ENCODE measurements at regions of chr1 and their contacts with region 1.

Region 1: DNA sequence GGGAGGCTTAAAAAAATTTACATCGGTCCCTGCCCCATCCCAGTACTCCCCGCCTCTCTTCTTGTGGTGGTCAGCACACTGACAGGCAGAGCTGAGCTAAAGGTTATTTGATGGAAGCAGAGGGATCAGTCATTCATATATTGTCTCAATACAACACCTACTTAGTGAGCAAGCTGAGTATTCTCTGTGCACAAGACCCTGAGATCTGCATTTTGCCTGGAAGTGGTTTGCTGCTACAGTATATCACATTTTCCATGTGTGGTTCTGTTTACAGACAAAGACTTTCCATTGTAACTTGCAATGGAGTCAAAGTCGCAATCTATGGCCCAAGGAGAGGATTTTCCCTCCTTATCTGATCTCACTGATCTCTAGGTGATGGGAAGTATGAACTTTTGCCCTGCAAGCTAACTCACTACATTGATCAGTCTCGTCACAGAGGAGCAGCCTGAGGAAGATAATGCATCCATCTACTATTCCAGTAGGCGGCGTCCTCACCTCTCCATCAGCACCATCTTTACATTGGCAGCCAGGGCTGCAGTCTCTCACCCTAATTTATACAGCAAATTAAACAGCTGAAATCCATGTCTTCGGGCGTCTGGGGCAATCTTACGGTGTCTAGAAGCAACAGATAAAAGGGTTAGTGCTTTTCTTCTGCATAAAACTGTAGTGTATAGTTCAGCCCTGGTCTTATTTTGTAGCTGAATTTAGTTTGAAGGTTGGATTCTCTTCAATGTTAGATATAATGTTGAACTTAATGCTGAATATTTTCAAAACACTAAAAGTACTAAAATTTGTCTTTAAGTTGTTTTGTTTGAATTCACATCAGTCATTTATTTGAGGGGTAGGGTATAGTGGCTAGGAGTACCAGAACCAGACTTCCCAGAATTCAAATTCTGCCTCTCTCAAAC is 3.2 kb upstream of the TRAF5 start:
- DNase-seq: peak; percentile 81
- ATAC-seq: peak; percentile 83
- H3K4me3 Mint-ChIP-seq: no peak overlapping the region
- H3K27ac Mint-ChIP-seq: peak overlapping the region; percentile 42
- H3K4me1 Mint-ChIP-seq: peaks cover 69% of the 10 kb centered on the region
- H3K27me3 Mint-ChIP-seq: no peaks in the 10 kb centered on the region

Region 2: DNA sequence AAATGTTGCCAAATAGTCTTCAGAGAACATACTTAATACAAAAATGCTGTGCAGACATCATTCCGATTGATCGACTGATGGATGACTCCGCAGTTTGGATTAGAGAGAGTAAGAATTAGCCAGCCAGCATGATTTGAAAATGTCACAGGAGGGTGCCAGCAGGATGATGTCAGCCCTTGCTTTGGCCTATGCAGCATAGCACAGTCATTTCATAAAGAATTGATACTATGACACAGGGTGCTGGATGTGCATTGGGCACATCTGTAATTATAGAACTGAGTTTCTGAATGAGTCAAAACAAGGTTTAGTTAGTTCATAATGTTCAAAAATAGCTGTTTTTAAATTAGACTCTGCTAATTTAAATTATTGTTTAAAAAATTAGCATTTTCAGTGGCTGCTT is 18.4 kb before region 1 on chr1:
- CTCF ChIA-PET with region 1: interaction called, 6 read pairs
- POLR2A ChIA-PET with region 1: no interaction called
- intact Hi-C with region 1: loop called (anchors 1 kb)
- DNase-seq: peak; percentile 76
- ATAC-seq: peak; percentile 100
- H3K4me3 Mint-ChIP-seq: no peak overlapping the region
- H3K27ac Mint-ChIP-seq: peak overlapping the region; percentile 74
- H3K4me1 Mint-ChIP-seq: peaks cover 38% of the 10 kb centered on the region
- H3K27me3 Mint-ChIP-seq: no peaks in the 10 kb centered on the region

Region 3: GRCh38 chr1:211352985-211353515 is 29.6 kb after region 1 on chr1:
- CTCF ChIA-PET with region 1: interaction called, 23 read pairs
- POLR2A ChIA-PET with region 1: interaction called, 5 read pairs
- intact Hi-C with region 1: loop called (anchors 1 kb)
- DNase-seq: peak; percentile 73
- ATAC-seq: peak; percentile 75
- H3K4me3 Mint-ChIP-seq: peak overlapping the region; percentile 28
- H3K27ac Mint-ChIP-seq: peak overlapping the region; percentile 88
- H3K4me1 Mint-ChIP-seq: peaks cover 81% of the 10 kb centered on the region
- H3K27me3 Mint-ChIP-seq: no peaks in the 10 kb centered on the region

Region 4: DNA sequence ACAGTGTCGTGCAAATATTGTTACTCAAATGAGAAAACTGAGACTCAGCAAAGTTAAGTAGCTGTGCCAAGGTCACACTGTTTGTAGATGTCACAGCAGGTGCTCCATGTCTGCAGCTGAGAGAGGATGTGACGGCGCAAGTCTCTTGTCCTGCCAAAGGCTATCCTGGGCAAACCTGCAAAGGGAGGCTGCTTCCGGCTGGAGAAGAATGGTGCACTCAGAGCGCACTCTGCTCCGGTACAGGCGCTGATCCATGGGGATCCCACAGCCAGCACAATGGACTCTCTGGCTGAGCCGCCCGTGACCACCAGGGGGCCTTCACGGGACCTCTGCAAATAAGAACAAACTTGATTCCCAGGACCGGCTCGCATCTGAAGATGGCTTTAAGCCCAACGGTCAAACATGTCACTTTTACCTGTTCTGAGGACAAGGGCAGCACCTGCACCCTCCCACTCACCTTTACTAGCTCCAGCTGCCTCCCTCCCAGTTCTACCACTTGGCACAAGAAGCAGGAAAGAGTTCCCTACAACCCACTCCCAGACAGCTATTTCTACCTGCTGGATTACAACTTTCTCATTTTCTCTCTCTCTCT is 146.6 kb after region 1 on chr1:
- CTCF ChIA-PET with region 1: interaction called, 10 read pairs
- POLR2A ChIA-PET with region 1: no interaction called
- intact Hi-C with region 1: no loop called
- DNase-seq: peak; percentile 70
- ATAC-seq: peak; percentile 74
- H3K4me3 Mint-ChIP-seq: no peak overlapping the region
- H3K27ac Mint-ChIP-seq: no peak overlapping the region
- H3K4me1 Mint-ChIP-seq: no peaks in the 10 kb centered on the region
- H3K27me3 Mint-ChIP-seq: no peaks in the 10 kb centered on the region

Region 5: GRCh38 chr1:211578640-211579433 is 255.4 kb after region 1 on chr1 and contains the start of gene SLC30A1:
- CTCF ChIA-PET with region 1: interaction called, 4 read pairs
- POLR2A ChIA-PET with region 1: no interaction called
- intact Hi-C with region 1: loop called (anchors 5 kb)
- DNase-seq: peak; percentile 100
- ATAC-seq: peak; percentile 94
- H3K4me3 Mint-ChIP-seq: peak within 1 kb of the TSS; percentile 89
- H3K27ac Mint-ChIP-seq: peak within 1 kb of the TSS; percentile 85
- H3K4me1 Mint-ChIP-seq: peaks cover 31% of the 10 kb centered on the region
- H3K27me3 Mint-ChIP-seq: no peaks in the 10 kb centered on the region
- total RNA-seq, gene SLC30A1: 2.9 to 4.5 TPM

Measured in activated CD4-positive, alpha-beta T cell treated with anti-CD3 and anti-CD28 coated beads for 36 hours (primary cell).